ENCODE measurements at regions of chr1 and their contacts with region 1.

Region 1: DNA sequence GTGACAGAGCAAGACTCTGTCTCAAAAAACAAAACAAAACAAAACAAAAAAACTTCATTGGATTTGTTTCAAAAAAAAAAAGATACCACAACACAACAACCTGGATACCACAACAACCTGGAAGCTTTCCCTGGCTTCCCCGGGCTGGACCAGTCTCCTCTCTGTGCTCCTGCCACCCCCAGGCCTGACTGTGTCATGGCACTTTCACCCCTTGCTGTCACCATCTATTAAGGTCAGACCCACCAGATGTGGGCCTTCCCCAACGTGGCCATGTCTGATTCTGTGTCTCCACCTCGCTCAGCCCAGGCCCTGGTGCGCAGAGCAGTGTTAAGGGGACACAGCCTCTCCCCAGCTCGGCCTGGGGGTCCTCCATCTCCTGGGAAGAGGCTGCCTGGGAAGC is 28.3 kb upstream of the ACOT11 start:
- DNase-seq: no peak
- ATAC-seq: no peak
- H3K4me3 ChIP-seq: no peak overlapping the region
- H3K4me3 Mint-ChIP-seq: no peak overlapping the region
- H3K27ac ChIP-seq: no peak overlapping the region
- H3K27ac Mint-ChIP-seq: no peak overlapping the region
- H3K4me1 ChIP-seq: no peaks in the 10 kb centered on the region
- H3K4me1 Mint-ChIP-seq: no peaks in the 10 kb centered on the region
- H3K27me3 ChIP-seq: no peaks in the 10 kb centered on the region
- H3K27me3 Mint-ChIP-seq: peaks cover 2% of the 10 kb centered on the region
- CTCF ChIP-seq: no peak

Region 2: DNA sequence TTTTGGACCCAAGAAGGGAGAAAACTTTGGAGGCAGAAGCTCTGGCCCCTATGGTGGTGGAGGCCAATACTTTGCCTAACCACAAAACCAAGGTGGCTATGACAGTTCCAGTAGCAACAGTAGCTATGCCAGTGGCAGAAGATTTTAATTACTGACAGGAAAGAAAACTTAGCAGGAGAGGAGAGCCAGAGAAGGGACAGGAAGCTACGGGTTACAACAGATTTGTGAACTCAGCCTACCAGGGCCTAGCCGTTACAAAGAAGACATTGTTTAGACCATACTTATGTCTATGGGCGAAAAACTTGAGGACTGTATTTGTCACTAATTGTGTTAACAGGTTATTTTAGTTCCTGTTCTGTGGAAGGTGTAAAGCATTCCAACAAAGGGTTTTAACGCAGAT is 17.9 kb after region 1 on chr1:
- CTCF ChIA-PET with region 1: no interaction called
- POLR2A ChIA-PET with region 1: no interaction called
- intact Hi-C with region 1: no loop called
- DNase-seq: no peak
- ATAC-seq: no peak
- H3K4me3 ChIP-seq: no peak overlapping the region
- H3K4me3 Mint-ChIP-seq: no peak overlapping the region
- H3K27ac ChIP-seq: no peak overlapping the region
- H3K27ac Mint-ChIP-seq: no peak overlapping the region
- H3K4me1 ChIP-seq: peaks cover 4% of the 10 kb centered on the region
- H3K4me1 Mint-ChIP-seq: peaks cover 9% of the 10 kb centered on the region
- H3K27me3 ChIP-seq: no peaks in the 10 kb centered on the region
- H3K27me3 Mint-ChIP-seq: peaks cover 6% of the 10 kb centered on the region
- CTCF ChIP-seq: no peak

Region 3: DNA sequence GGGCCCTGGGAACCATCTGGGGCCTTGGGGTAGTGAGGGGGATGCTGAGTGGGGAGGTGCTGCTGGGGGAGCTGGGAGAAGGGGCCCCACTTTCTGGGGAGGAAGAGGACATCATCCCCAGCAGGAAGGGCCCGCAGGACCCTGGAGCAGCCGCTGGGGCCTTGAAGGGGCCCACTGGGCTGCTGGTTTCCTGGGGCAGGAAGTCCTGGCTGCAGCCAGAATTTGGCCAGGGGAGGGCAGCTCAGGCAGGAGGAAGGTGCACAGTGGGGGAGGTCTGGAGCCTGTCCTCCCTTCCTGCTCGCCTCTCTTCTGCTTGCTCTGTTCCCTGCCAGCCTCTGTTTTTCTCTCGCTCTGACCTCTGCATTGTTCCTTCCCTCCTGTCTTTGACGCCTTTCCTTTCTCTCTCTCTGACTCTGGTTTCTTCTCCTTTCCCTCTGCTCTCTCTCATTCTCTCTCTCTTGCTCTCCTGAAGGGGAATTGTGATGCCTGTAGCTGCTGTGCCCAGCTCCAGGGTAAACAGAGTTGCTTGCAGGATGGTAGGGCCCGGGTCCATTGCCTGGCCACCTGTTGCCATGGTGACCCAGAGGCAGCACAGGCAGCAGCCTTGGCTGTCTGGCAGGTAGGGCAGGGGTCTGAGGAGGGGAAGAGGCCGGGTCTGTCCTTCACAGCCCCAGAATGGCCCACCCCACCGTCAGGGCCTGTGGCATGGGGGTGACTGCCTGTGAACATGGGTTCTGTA is 52.3 kb after region 1 on chr1:
- CTCF ChIA-PET with region 1: no interaction called
- POLR2A ChIA-PET with region 1: no interaction called
- intact Hi-C with region 1: loop called in 1 of 2 experiments (anchors 5 kb)
- DNase-seq: no peak
- ATAC-seq: no peak
- H3K4me3 ChIP-seq: no peak overlapping the region
- H3K4me3 Mint-ChIP-seq: no peak overlapping the region
- H3K27ac ChIP-seq: no peak overlapping the region
- H3K27ac Mint-ChIP-seq: no peak overlapping the region
- H3K4me1 ChIP-seq: no peaks in the 10 kb centered on the region
- H3K4me1 Mint-ChIP-seq: no peaks in the 10 kb centered on the region
- H3K27me3 ChIP-seq: no peaks in the 10 kb centered on the region
- H3K27me3 Mint-ChIP-seq: no peaks in the 10 kb centered on the region
- CTCF ChIP-seq: no peak